Activated naive CD4-positive, alpha-beta T cell treated with anti-CD3 and anti-CD28 coated beads, Interleukin-2, amount 10 ng/mL, durations not matched to agents 7 days and 5 days (primary cell): ENCODE measurements at regions of chr14 and their contacts with region 1.

Region 1: DNA sequence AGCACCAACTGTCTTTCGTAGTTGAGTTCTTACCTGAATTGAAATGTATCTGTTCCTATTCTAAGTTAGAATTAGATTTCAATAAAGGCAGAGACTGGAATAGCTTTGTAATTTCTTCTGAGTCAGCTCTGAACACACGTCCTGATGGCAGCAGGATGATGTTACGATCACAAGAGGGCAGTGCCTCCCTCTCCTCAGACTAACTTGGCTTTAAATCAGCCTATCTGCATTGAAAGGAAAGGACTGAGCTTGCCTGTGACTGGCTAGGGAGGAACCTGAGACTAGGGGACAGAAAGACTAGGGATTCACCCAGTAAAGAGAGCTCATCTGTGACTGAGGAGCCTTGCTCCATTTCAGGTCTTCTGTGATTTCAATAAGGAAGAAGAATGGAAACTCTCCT is 323.7 kb upstream of the OR4E1 start:
- DNase-seq: peak; percentile 64
- H3K4me3 Mint-ChIP-seq: peak overlapping the region; percentile 95
- H3K27ac Mint-ChIP-seq: peak overlapping the region; percentile 97
- H3K4me1 Mint-ChIP-seq: peaks cover 34% of the 10 kb centered on the region
- H3K27me3 Mint-ChIP-seq: peaks cover 4% of the 10 kb centered on the region

Region 2: DNA sequence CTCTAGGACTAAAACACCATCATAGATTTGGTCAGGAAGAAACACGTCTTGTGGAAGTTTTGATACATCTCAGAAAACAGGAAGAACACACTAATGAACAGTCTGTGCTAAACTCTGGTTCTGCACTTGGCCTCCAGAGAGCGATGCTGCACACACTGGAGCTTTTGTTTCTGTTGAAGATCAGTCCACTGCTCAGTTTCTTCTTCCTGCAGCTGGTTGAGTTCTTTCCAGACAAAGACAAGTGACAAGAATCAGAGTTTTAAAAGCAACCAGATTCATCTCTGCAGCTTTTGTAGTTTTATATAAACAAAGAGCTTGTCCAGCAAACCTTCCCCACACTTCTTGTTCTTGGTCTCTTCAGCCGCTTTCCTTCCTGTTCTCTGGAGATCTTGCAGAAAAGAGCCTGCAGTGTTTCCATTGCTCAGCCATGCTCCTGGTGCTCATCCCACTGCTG is 94.6 kb before region 1 on chr14:
- CTCF ChIA-PET with region 1: no interaction called
- DNase-seq: peak; percentile 65
- H3K4me3 Mint-ChIP-seq: peak overlapping the region; percentile 67
- H3K27ac Mint-ChIP-seq: peak overlapping the region; percentile 76
- H3K4me1 Mint-ChIP-seq: peaks cover 19% of the 10 kb centered on the region
- H3K27me3 Mint-ChIP-seq: peaks cover 9% of the 10 kb centered on the region

Region 3: DNA sequence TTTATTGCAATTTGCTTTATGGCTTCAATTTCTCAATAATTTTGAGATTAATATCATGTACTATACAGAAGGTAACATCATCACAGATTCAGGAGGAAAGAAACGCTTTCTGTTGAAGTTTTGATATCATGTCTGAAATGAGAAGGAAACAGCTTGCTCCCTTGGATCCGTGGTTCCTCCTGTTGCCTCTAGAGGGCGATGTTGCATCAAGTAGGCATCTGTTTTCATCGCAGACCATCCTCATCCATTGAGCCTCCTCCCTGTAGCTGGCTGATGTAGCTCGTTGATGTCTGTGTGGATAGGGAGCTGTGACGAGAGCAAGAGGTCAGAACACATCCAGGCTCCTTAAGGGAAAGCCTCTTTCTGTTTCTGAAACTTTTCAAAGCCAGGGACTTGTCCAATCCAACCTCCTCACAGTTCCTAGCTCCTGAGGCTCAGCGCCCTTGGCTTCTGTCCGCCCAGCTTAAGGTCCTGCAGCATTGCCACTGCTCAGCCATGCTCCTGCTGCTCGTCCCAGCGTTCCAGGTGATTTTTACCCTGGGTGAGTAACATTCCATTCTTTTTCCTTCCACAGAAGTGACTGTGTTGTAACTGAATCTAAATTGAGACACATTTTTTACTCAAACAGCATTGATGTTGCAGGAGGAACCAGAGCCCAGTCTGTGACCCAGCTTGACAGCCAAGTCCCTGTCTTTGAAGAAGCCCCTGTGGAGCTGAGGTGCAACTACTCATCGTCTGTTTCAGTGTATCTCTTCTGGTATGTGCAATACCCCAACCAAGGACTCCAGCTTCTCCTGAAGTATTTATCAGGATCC is 18.9 kb before region 1 on chr14:
- CTCF ChIA-PET with region 1: interaction called, 69 read pairs
- DNase-seq: peak; percentile 72
- H3K4me3 Mint-ChIP-seq: peak overlapping the region; percentile 75
- H3K27ac Mint-ChIP-seq: peak overlapping the region; percentile 88
- H3K4me1 Mint-ChIP-seq: peaks cover 31% of the 10 kb centered on the region
- H3K27me3 Mint-ChIP-seq: peaks cover 12% of the 10 kb centered on the region

Region 4: DNA sequence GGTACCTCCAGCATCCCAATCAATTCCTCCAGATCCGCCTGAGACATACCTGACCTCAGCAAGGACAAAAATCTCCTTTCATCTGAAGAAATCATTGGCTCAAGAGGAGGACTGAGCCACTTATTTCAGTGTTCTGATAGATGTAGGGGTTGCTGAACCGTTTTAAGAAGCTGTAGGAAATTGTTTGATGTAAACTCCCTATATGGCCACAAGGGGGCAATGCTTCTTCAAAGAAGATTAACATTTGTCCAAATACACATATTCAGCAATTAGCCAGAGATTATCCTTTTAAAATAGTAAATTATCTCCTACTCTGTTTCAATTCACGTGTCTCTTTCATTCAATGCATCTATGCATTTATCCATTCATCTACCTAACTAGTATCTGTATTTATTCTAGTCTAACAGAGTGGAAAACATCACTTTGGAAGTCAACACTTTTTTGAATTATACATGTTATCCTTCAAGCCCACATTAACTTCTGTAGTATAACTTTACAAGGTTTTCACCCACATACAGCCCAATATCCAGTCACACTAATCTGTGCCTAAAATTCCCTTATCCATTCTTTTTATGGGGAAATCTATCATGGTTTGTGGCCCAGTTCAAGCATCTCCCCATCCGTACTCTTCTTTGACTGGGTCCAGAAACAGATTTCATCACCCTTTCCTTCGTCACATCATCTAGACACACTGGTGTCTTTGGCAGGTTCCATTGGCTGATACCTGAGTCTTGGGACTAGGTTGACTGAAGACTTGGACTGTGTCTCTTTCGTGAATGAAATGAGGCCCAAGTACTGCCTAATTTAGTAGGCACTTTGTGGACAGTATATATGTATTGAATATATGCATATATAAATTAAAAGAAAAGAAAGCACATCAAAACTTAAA is 87.3 kb after region 1 on chr14:
- CTCF ChIA-PET with region 1: no interaction called
- DNase-seq: no peak
- H3K4me3 Mint-ChIP-seq: peak overlapping the region; percentile 69
- H3K27ac Mint-ChIP-seq: peak overlapping the region; percentile 79
- H3K4me1 Mint-ChIP-seq: peaks cover 42% of the 10 kb centered on the region
- H3K27me3 Mint-ChIP-seq: no peaks in the 10 kb centered on the region

Region 5: DNA sequence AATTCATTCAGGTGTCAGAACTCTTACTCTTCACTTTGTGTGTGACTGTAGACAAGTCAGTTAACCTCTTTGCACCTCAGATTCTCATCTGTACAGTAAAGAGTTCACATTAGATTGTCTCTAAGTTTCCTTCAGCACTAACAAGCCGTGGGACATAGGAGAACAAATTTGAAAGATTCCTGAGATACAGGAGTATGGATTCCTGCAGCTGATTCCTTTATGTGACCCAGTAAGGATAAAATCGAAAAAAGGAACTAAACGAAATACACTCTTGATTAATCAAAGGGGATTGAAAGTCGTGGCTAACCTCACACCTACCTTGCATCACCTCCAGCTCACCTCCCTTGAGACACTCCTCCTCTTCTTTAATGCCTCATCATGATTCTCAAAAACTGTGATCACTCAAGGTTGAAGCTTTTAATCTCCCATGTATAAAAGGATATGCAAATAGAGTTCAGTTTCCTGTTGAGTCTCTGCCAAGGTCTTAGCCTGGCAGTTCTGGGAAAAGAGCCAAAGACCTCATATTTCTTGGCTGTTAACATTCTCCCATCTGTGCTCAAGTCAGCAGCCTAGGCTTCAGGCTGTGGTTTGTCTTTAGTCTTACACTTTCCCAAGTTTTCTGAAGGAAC is 435.2 kb after region 1 on chr14:
- CTCF ChIA-PET with region 1: no interaction called
- DNase-seq: no peak
- H3K4me3 Mint-ChIP-seq: no peak overlapping the region
- H3K27ac Mint-ChIP-seq: no peak overlapping the region
- H3K4me1 Mint-ChIP-seq: no peaks in the 10 kb centered on the region
- H3K27me3 Mint-ChIP-seq: no peaks in the 10 kb centered on the region

Region 6: GRCh38 chr14:22556990-22557623 is 559.8 kb after region 1 on chr14:
- CTCF ChIA-PET with region 1: interaction called, 16 read pairs
- DNase-seq: peak; percentile 93
- H3K4me3 Mint-ChIP-seq: peak overlapping the region; percentile 80
- H3K27ac Mint-ChIP-seq: peak overlapping the region; percentile 97
- H3K4me1 Mint-ChIP-seq: peaks cover 92% of the 10 kb centered on the region
- H3K27me3 Mint-ChIP-seq: peaks cover 8% of the 10 kb centered on the region

Region 7: GRCh38 chr14:23085458-23085857 is 1088.2 kb after region 1 on chr14:
- CTCF ChIA-PET with region 1: no interaction called
- DNase-seq: no peak
- H3K4me3 Mint-ChIP-seq: no peak overlapping the region
- H3K27ac Mint-ChIP-seq: no peak overlapping the region
- H3K4me1 Mint-ChIP-seq: peaks cover 4% of the 10 kb centered on the region
- H3K27me3 Mint-ChIP-seq: no peaks in the 10 kb centered on the region